CD4-positive, alpha-beta T cell (primary cell): ENCODE measurements at regions of chr3 and their contacts with region 1.

Region 1: GRCh38 chr3:169966428-169966950 is at the start of gene SEC62:
- DNase-seq: peak; percentile 92 to 97 (median 94)
- ATAC-seq: peak; percentile 84
- H3K4me3 ChIP-seq: peak within 1 kb of the TSS; percentile 66
- H3K4me3 Mint-ChIP-seq: peak within 1 kb of the TSS; percentile 99
- H3K27ac ChIP-seq: peak within 1 kb of the TSS; percentile 84 to 92
- H3K27ac Mint-ChIP-seq: peak within 1 kb of the TSS; percentile 99
- H3K4me1 ChIP-seq: peaks cover 18% of the 10 kb centered on the region
- H3K4me1 Mint-ChIP-seq: peaks cover 78% of the 10 kb centered on the region
- H3K27me3 ChIP-seq: no peaks in the 10 kb centered on the region
- H3K27me3 Mint-ChIP-seq: no peaks in the 10 kb centered on the region
- CTCF ChIP-seq: no peak
- total RNA-seq, gene SEC62: 113 to 117 TPM

Region 2: DNA sequence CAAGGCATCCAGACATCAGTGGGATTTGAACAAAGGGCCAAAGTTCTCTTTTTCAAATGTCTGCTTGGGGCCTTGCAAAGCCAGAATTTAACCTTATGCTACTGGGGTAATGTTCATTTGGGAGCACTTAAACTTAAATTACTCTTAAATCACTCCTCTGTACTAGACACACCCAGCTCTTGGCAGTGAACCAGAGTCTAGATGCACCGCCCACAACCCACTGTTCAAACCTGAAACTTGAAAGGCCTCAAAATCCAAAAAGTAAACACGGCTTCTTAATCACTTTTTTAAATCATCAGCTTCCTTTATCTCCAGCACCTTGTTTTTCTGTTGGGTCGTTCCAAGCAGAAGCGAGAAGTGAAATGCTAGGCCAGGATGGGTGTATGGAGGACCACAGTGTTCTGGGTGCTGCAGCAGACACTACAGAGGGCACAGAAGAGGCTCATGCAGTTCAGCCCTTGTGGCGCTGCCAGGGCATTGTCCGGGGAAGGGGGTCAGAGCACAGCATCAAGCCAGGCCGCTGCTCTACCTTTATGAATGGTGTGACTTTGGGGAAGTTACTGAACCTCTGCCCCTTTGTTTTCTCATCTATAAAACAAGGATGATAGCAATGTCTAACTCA is 331.8 kb before region 1 on chr3:
- CTCF ChIA-PET with region 1: no interaction called
- POLR2A ChIA-PET with region 1: no interaction called
- intact Hi-C with region 1: no loop called
- DNase-seq: peak in 4 of 14 experiments; percentile 9 to 26 (median 13)
- ATAC-seq: peak; percentile 61
- H3K4me3 ChIP-seq: no peak overlapping the region
- H3K4me3 Mint-ChIP-seq: no peak overlapping the region
- H3K27ac ChIP-seq: no peak overlapping the region
- H3K27ac Mint-ChIP-seq: peak overlapping the region; percentile 63
- H3K4me1 ChIP-seq: no peaks in the 10 kb centered on the region
- H3K4me1 Mint-ChIP-seq: peaks cover 29% of the 10 kb centered on the region
- H3K27me3 ChIP-seq: peaks cover 0 to 3% of the 10 kb centered on the region in 2 experiments
- H3K27me3 Mint-ChIP-seq: peaks cover 8% of the 10 kb centered on the region
- CTCF ChIP-seq: no peak

Region 3: GRCh38 chr3:169812332-169813235 is 153.9 kb before region 1 on chr3 and contains the starts of genes LRRC34 and LRRIQ4:
- CTCF ChIA-PET with region 1: interaction called, 3 read pairs
- POLR2A ChIA-PET with region 1: interaction called, 4 read pairs
- intact Hi-C with region 1: loop called in 1 of 2 experiments (anchors 5 kb)
- DNase-seq: peak; percentile 33 to 81 (median 53)
- ATAC-seq: peak; percentile 45
- H3K4me3 ChIP-seq: peak within 1 kb of the TSS; percentile 68
- H3K4me3 Mint-ChIP-seq: peak within 1 kb of the TSS; percentile 94
- H3K27ac ChIP-seq: no peak within 1 kb of the TSS
- H3K27ac Mint-ChIP-seq: peak within 1 kb of the TSS; percentile 43
- H3K4me1 ChIP-seq: peaks cover 27% of the 10 kb centered on the region
- H3K4me1 Mint-ChIP-seq: peaks cover 26% of the 10 kb centered on the region
- H3K27me3 ChIP-seq: no peaks in the 10 kb centered on the region
- H3K27me3 Mint-ChIP-seq: no peaks in the 10 kb centered on the region
- CTCF ChIP-seq: no peak
- total RNA-seq, gene LRRC34: 0.22 to 0.52 TPM
- total RNA-seq, gene LRRIQ4: not detected

Region 4: GRCh38 chr3:169954142-169954756 is 12.2 kb before region 1 on chr3:
- CTCF ChIA-PET with region 1: no interaction called
- POLR2A ChIA-PET with region 1: interaction called, 10 read pairs
- intact Hi-C with region 1: no loop called
- DNase-seq: peak in 3 of 14 experiments; percentile 13 to 31 (median 29)
- ATAC-seq: no peak
- H3K4me3 ChIP-seq: no peak overlapping the region
- H3K4me3 Mint-ChIP-seq: no peak overlapping the region
- H3K27ac ChIP-seq: no peak overlapping the region
- H3K27ac Mint-ChIP-seq: no peak overlapping the region
- H3K4me1 ChIP-seq: no peaks in the 10 kb centered on the region
- H3K4me1 Mint-ChIP-seq: no peaks in the 10 kb centered on the region
- H3K27me3 ChIP-seq: peaks cover 0 to 6% of the 10 kb centered on the region in 2 experiments
- H3K27me3 Mint-ChIP-seq: peaks cover 14% of the 10 kb centered on the region
- CTCF ChIP-seq: no peak

Region 5: GRCh38 chr3:170027233-170028102 is 61.0 kb after region 1 on chr3:
- CTCF ChIA-PET with region 1: no interaction called
- POLR2A ChIA-PET with region 1: interaction called, 13 read pairs
- intact Hi-C with region 1: loop called in 1 of 2 experiments (anchors 5 kb)
- DNase-seq: peak in 2 of 14 experiments; percentile 17 to 62
- ATAC-seq: no peak
- H3K4me3 ChIP-seq: no peak overlapping the region
- H3K4me3 Mint-ChIP-seq: no peak overlapping the region
- H3K27ac ChIP-seq: no peak overlapping the region
- H3K27ac Mint-ChIP-seq: no peak overlapping the region
- H3K4me1 ChIP-seq: peaks cover 11% of the 10 kb centered on the region
- H3K4me1 Mint-ChIP-seq: peaks cover 26% of the 10 kb centered on the region
- H3K27me3 ChIP-seq: no peaks in the 10 kb centered on the region
- H3K27me3 Mint-ChIP-seq: no peaks in the 10 kb centered on the region
- CTCF ChIP-seq: no peak

Region 6: DNA sequence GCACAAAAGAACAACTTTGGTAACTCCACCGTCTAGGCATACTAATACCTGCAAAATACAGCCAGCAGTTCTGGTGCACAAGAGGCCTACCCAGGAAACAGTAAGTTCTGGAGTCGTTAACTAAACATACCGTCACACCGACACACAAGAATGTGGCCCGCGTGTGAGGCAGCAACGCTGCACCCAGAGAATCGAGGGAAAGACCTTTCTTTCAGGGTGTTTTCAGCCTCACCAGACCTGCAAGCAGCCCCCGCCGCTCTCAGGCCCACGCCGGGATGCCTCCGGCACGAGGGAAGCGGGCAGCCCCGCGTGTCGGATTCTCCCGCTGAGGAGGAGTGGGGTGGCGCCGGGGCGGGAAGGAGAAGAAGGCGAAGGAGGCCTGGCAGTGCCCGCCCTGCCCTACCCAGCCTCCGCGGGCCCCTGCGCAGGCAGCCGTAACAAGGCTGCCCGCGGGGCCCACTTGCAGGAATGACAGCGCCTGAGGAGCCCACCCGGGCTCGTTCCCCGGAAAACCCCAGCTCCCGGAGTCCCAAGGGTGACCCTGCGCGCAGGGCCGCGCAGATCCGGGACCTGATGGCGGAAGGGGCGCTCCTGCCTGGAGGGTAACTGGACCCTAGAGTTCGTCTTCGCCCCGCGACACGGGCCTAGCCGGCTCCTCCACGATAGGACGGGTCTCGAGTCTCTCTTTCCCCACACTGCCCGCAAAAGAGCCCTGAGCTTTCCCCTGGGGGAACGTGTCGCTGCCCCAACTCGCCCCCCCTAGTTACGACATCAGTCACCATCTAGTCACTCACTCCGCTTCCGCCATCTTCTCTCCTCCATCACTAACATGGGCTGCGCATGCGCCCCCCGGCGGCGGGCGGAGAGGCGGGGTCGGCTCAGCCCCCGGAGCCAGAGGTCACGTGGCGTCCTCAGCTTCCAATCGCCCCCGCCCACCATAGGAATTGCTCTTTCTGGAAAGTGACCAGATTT is 214.7 kb after region 1 on chr3 and contains the start of gene PHC3:
- CTCF ChIA-PET with region 1: interaction called, 4 read pairs
- POLR2A ChIA-PET with region 1: interaction called, 25 read pairs
- intact Hi-C with region 1: loop called in 1 of 2 experiments (anchors 5 kb)
- DNase-seq: peak; percentile 85 to 96 (median 90)
- ATAC-seq: peak; percentile 64
- H3K4me3 ChIP-seq: peak within 1 kb of the TSS; percentile 96
- H3K4me3 Mint-ChIP-seq: peak within 1 kb of the TSS; percentile 100
- H3K27ac ChIP-seq: peak within 1 kb of the TSS; percentile 97 to 99
- H3K27ac Mint-ChIP-seq: peak within 1 kb of the TSS; percentile 100
- H3K4me1 ChIP-seq: peaks cover 36% of the 10 kb centered on the region
- H3K4me1 Mint-ChIP-seq: peaks cover 40% of the 10 kb centered on the region
- H3K27me3 ChIP-seq: no peaks in the 10 kb centered on the region
- H3K27me3 Mint-ChIP-seq: no peaks in the 10 kb centered on the region
- CTCF ChIP-seq: no peak
- total RNA-seq, gene PHC3: 143 to 150 TPM

Region 7: DNA sequence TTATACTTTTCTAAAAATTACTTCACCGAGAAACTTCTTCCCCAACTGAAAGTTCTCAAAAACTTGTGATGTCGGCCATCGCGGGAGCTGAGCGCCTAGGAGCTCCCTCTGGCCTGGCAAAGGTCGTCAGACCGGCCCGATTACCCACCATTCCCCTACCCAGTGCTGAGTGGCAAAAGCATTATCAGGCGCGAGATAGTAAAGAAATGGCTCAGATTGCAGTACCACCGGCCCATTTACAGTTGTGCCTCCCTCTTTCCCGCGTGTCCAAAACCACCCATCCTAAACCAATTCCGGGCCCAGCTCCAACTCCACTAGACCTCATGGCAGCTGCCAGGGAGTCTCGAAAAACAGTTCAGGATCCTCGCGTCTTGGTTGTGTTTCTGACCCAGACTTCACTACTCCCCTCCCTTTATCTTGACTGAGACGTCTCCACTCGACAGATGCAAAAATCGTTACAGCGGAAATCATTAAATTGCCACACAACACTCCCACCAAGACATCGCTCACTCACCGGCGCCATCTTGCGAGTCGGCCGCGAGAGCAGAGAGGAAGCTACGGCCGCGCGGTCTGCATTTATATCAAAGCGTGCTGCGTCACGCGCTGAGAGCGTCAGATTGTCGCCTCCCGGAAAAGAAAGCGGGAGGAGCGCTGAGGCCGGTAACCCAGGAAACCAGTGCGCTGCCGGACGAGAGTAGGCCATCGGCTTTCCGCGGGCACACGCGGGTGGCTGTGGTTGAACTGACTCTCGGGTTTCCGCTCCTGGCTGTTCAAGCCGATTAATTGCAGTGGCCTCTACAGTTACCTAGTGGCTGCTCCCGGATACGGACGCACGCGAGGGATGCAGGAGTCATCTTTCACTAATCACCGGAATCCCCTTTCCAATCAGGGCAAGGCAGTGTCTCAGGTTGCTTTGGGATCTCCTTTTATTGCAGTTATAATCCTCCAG is 903.4 kb after region 1 on chr3 and contains the start of gene RPL22L1:
- CTCF ChIA-PET with region 1: no interaction called
- POLR2A ChIA-PET with region 1: interaction called, 5 read pairs
- intact Hi-C with region 1: loop called in 1 of 2 experiments (anchors 10 kb)
- DNase-seq: peak; percentile 86 to 97 (median 89)
- ATAC-seq: peak; percentile 93
- H3K4me3 ChIP-seq: peak within 1 kb of the TSS; percentile 84
- H3K4me3 Mint-ChIP-seq: peak within 1 kb of the TSS; percentile 93
- H3K27ac ChIP-seq: peak within 1 kb of the TSS; percentile 68 to 94
- H3K27ac Mint-ChIP-seq: peak within 1 kb of the TSS; percentile 93
- H3K4me1 ChIP-seq: peaks cover 25% of the 10 kb centered on the region
- H3K4me1 Mint-ChIP-seq: peaks cover 32% of the 10 kb centered on the region
- H3K27me3 ChIP-seq: no peaks in the 10 kb centered on the region
- H3K27me3 Mint-ChIP-seq: no peaks in the 10 kb centered on the region
- CTCF ChIP-seq: peak; percentile 12
- total RNA-seq, gene RPL22L1: 53.5 to 55.6 TPM